ENCODE measurements at regions of chr11 and their contacts with region 1.

Region 1: DNA sequence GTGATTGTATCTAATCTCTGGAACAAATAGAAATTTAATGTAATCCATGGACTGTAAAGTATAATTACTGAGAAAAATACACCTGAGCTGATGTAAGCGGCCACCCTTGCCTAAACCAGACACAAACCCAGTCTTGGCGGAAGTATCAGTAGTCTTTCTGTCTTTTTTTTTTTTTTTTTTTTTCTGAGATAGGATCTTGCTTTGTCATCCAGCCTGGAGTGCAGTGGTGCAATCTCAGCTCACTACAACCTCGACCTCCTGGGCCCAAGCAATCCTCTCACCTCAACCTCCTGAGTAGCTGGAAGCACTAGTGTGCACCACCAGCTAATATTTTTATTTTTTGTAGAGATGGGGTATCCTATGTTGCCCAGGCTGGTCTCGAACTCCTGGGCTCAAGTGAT is 5.5 kb upstream of the CXCR5 start:
- DNase-seq: peak in 4 of 10 donors; percentile 30 to 67 (median 56)
- ATAC-seq: peak; percentile 11 to 24
- H3K4me3 Mint-ChIP-seq: peak overlapping the region; percentile 25 to 85 (median 64)
- H3K27ac Mint-ChIP-seq: peak overlapping the region; percentile 97 to 100 (median 100)
- H3K4me1 Mint-ChIP-seq: peaks cover 47 to 93% (median 91%) of the 10 kb centered on the region in 4 donors
- H3K27me3 Mint-ChIP-seq: no peaks in the 10 kb centered on the region

Region 2: GRCh38 chr11:118901494-118902335 is 23.6 kb after region 1 on chr11:
- POLR2A ChIA-PET with region 1: interaction called, 24 read pairs
- DNase-seq: no peak
- ATAC-seq: no peak
- H3K4me3 Mint-ChIP-seq: no peak overlapping the region
- H3K27ac Mint-ChIP-seq: peak overlapping the region; percentile 41 to 92 (median 80)
- H3K4me1 Mint-ChIP-seq: peaks cover 21 to 66% (median 41%) of the 10 kb centered on the region in 4 donors
- H3K27me3 Mint-ChIP-seq: no peaks in the 10 kb centered on the region

Region 3: GRCh38 chr11:119067371-119068222 is 189.4 kb after region 1 on chr11 and contains the start of gene VPS11:
- POLR2A ChIA-PET with region 1: no interaction called
- DNase-seq: peak; percentile 93 to 98 (median 97)
- ATAC-seq: peak; percentile 93 to 96
- H3K4me3 Mint-ChIP-seq: peak within 1 kb of the TSS; percentile 88 to 100 (median 96)
- H3K27ac Mint-ChIP-seq: peak within 1 kb of the TSS; percentile 96 to 100 (median 99)
- H3K4me1 Mint-ChIP-seq: peaks cover 15 to 60% (median 39%) of the 10 kb centered on the region in 4 donors
- H3K27me3 Mint-ChIP-seq: no peaks in the 10 kb centered on the region
- polyA plus RNA-seq, gene VPS11: 43.2 to 58.4 (median 44.8) TPM